Heart right ventricle (tissue), 16 donors: ENCODE measurements at regions of chr3 and their contacts with region 1.

Region 1: GRCh38 chr3:153291056-153291685 is 129.1 kb downstream of the RAP2B start:
- DNase-seq: no peak
- ATAC-seq: peak in 2 of 8 donors; percentile 61 to 79
- H3K4me3 ChIP-seq: no peak overlapping the region
- H3K27ac ChIP-seq: peak overlapping the region in 1 of 10 donors; percentile 7
- H3K4me1 ChIP-seq: peaks cover 0 to 44% (median 2%) of the 10 kb centered on the region in 9 donors
- H3K27me3 ChIP-seq: no peaks in the 10 kb centered on the region
- CTCF ChIP-seq: peak in 8 of 9 donors; percentile 7 to 62 (median 44)

Region 2: GRCh38 chr3:153038779-153039178 is 252.4 kb before region 1 on chr3:
- intact Hi-C with region 1: loop called in 6 of 10 experiments (anchors 5 to 10 kb)
- DNase-seq: no peak
- ATAC-seq: peak in 2 of 8 donors; percentile 73 to 75
- H3K4me3 ChIP-seq: no peak overlapping the region
- H3K27ac ChIP-seq: peak overlapping the region in 3 of 10 donors; percentile 11 to 27 (median 23)
- H3K4me1 ChIP-seq: peaks cover 0 to 13% (median 5%) of the 10 kb centered on the region in 9 donors
- H3K27me3 ChIP-seq: no peaks in the 10 kb centered on the region
- CTCF ChIP-seq: no peak

Region 3: GRCh38 chr3:153350420-153350819 is 59.2 kb after region 1 on chr3:
- intact Hi-C with region 1: no loop called
- DNase-seq: no peak
- ATAC-seq: no peak
- H3K4me3 ChIP-seq: no peak overlapping the region
- H3K27ac ChIP-seq: no peak overlapping the region
- H3K4me1 ChIP-seq: no peaks in the 10 kb centered on the region
- H3K27me3 ChIP-seq: no peaks in the 10 kb centered on the region
- CTCF ChIP-seq: no peak

Region 4: GRCh38 chr3:153595186-153595815 is 304.1 kb after region 1 on chr3:
- intact Hi-C with region 1: loop called in 2 of 10 experiments (anchors 5 to 10 kb)
- DNase-seq: no peak
- ATAC-seq: peak in 4 of 8 donors; percentile 52 to 60 (median 58)
- H3K4me3 ChIP-seq: no peak overlapping the region
- H3K27ac ChIP-seq: no peak overlapping the region
- H3K4me1 ChIP-seq: peaks cover 0 to 12% (median 7%) of the 10 kb centered on the region in 9 donors
- H3K27me3 ChIP-seq: no peaks in the 10 kb centered on the region
- CTCF ChIP-seq: peak; percentile 16 to 71 (median 60)

Region 5: GRCh38 chr3:153768561-153769469 is 477.6 kb after region 1 on chr3:
- intact Hi-C with region 1: loop called in 2 of 10 experiments (anchors 10 kb)
- DNase-seq: peak in 1 of 2 donors; percentile 22
- ATAC-seq: peak; percentile 57 to 89 (median 81)
- H3K4me3 ChIP-seq: no peak overlapping the region
- H3K27ac ChIP-seq: no peak overlapping the region
- H3K4me1 ChIP-seq: no peaks in the 10 kb centered on the region
- H3K27me3 ChIP-seq: no peaks in the 10 kb centered on the region
- CTCF ChIP-seq: peak; percentile 66 to 85 (median 79)